Right lobe of liver (tissue), 6 donors: ENCODE measurements at regions of chr17 and their contacts with region 1.

Region 1: GRCh38 chr17:56939901-56940343 is 20.9 kb downstream of the COIL start:
- DNase-seq: no peak
- ATAC-seq: peak; percentile 77 to 83 (median 78)
- H3K4me3 ChIP-seq: no peak overlapping the region
- H3K27ac ChIP-seq: no peak overlapping the region
- H3K4me1 ChIP-seq: peaks cover 0 to 13% (median 0%) of the 10 kb centered on the region in 4 donors
- H3K27me3 ChIP-seq: no peaks in the 10 kb centered on the region
- CTCF ChIP-seq: peak; percentile 66 to 72 (median 68)
- POLR2A ChIP-seq: no peak

Region 2: DNA sequence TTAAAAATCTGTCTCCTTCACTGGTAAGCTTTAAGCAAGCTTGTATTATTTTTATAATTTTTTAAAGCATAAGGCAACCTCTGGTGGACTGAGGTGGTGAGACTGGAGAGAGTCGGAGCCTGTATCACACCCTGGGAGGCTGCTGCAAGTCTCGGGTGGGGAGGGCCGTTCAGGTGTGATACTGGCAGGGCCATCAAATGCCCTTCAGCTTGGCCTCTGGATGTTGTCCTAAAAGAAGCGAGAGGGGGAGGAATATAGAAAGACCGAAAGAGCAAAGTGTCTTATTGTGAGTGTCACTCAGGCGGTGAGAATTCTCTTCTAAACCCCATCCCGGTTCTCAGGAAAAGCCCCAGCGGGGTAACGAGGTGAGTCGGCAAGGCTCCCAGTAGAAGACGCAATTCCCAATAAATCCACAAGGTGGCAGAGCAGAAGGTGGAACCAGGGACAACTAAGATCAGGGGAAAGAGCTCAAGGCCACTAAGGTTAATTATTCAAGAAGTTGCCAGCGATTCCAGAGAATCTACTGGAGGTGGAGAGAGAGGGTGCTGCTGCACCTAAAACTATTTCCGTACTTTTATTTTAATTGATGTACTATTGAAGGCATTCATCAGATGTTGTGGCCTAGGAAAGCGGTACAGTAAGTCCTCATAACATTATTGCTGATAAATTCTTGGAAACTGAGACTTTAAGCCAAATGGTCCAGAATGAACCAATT is 120.3 kb before region 1 on chr17:
- intact Hi-C with region 1: loop called (anchors 10 kb)
- DNase-seq: peak in 2 of 3 donors; percentile 38 to 78
- ATAC-seq: peak; percentile 79 to 85 (median 82)
- H3K4me3 ChIP-seq: no peak overlapping the region
- H3K27ac ChIP-seq: peak overlapping the region in 2 of 3 donors; percentile 41 to 61
- H3K4me1 ChIP-seq: peaks cover 0 to 39% (median 18%) of the 10 kb centered on the region in 4 donors
- H3K27me3 ChIP-seq: no peaks in the 10 kb centered on the region
- CTCF ChIP-seq: peak; percentile 88 to 93 (median 90)
- POLR2A ChIP-seq: no peak

Region 3: GRCh38 chr17:57009737-57010445 is 70.0 kb after region 1 on chr17:
- intact Hi-C with region 1: no loop called
- DNase-seq: peak in 2 of 3 donors; percentile 38 to 60
- ATAC-seq: peak; percentile 89 to 93 (median 92)
- H3K4me3 ChIP-seq: no peak overlapping the region
- H3K27ac ChIP-seq: no peak overlapping the region
- H3K4me1 ChIP-seq: no peaks in the 10 kb centered on the region
- H3K27me3 ChIP-seq: no peaks in the 10 kb centered on the region
- CTCF ChIP-seq: peak; percentile 59 to 68 (median 62)
- POLR2A ChIP-seq: no peak